ENCODE measurements at regions of chr10 and their contacts with region 1.

Region 1: GRCh38 chr10:31353574-31353973 is 34.6 kb downstream of the ZEB1 start:
- DNase-seq: peak; percentile 40
- H3K4me3 Mint-ChIP-seq: no peak overlapping the region
- H3K27ac Mint-ChIP-seq: no peak overlapping the region
- H3K4me1 Mint-ChIP-seq: peaks cover 60% of the 10 kb centered on the region
- H3K27me3 Mint-ChIP-seq: no peaks in the 10 kb centered on the region

Region 2: DNA sequence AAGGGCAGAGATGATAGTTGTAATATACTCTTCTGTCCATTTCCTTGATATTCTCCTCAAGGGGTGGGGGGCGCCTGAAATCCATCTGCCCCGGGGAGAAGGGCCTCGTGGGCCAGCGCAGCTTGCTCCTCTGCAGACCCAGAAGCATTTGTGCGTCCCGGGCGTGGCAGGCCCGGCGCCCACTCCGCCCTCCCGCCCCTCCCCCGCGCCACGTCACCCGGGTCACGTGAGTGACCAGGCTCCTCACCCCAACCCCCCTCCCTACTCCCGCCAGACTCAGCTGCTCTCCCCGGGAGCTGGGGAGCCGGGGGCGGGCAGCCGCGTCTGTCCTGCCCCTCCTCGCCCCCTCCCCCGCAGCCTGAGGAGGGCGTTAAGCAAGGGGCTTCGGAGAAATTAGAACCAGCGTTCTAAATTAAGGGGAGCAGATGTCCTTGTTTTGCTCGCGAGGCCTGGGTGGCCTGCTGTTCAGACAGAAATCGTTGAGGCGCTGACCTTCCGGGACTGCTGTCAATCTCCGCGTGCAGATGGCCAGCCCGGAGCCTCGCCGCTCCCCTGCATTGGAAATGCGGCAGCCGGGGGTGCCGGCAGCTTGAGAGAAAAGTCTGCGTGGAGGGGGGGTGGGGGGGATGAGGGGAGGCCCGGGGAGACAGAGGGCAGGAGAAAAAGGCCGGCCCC is 219.8 kb before region 1 on chr10:
- CTCF ChIA-PET with region 1: no interaction called
- intact Hi-C with region 1: loop called (anchors 5 kb)
- DNase-seq: peak; percentile 76
- H3K4me3 Mint-ChIP-seq: peak overlapping the region; percentile 68
- H3K27ac Mint-ChIP-seq: no peak overlapping the region
- H3K4me1 Mint-ChIP-seq: peaks cover 37% of the 10 kb centered on the region
- H3K27me3 Mint-ChIP-seq: no peaks in the 10 kb centered on the region

Region 3: DNA sequence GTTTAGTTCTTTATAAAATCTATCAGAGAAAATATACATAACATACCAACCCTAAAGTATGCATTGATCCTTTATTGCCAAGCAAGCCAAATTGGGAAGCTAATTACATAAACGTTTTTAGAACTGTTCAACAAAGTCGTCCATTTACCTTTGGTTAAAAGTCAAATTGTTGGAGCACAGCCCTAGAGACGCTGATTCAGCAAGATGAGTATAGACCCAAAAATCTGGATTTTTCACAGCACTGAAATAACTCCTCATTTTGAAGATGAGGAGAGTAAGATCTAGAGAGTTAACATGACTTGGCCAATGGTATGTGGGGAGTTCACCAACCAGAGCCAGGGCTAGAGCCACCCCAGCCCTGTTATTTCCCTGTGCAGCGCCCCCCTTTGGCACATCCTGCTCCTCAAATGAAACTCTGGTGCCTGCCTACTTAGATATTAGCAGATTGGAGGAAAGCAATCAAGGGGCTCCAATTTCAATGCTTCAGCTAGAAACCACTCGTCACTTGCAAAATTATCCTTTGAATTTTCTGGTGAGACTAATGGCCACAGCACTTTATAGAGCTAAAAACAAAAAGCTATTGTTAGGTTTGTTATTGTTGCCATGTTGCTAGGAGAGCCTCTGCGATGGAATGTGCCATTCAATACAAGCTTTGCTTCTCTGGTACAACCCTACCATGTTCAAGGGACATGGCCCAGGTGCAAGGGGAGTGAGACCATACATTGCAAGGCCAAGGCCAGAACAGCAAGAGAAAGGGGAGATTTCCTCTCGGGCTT is 167.2 kb before region 1 on chr10:
- CTCF ChIA-PET with region 1: no interaction called
- intact Hi-C with region 1: no loop called
- DNase-seq: no peak
- H3K4me3 Mint-ChIP-seq: no peak overlapping the region
- H3K27ac Mint-ChIP-seq: no peak overlapping the region
- H3K4me1 Mint-ChIP-seq: no peaks in the 10 kb centered on the region
- H3K27me3 Mint-ChIP-seq: no peaks in the 10 kb centered on the region

Region 4: GRCh38 chr10:31426401-31426800 is 72.8 kb after region 1 on chr10:
- CTCF ChIA-PET with region 1: interaction called, 6 read pairs
- intact Hi-C with region 1: loop called (anchors 2 kb)
- DNase-seq: no peak
- H3K4me3 Mint-ChIP-seq: no peak overlapping the region
- H3K27ac Mint-ChIP-seq: no peak overlapping the region
- H3K4me1 Mint-ChIP-seq: peaks cover 54% of the 10 kb centered on the region
- H3K27me3 Mint-ChIP-seq: no peaks in the 10 kb centered on the region

Region 5: GRCh38 chr10:31549896-31550295 is 196.3 kb after region 1 on chr10:
- CTCF ChIA-PET with region 1: no interaction called
- intact Hi-C with region 1: no loop called
- DNase-seq: no peak
- H3K4me3 Mint-ChIP-seq: no peak overlapping the region
- H3K27ac Mint-ChIP-seq: no peak overlapping the region
- H3K4me1 Mint-ChIP-seq: no peaks in the 10 kb centered on the region
- H3K27me3 Mint-ChIP-seq: no peaks in the 10 kb centered on the region